T-cell (primary cell): ENCODE measurements at regions of chr6 and their contacts with region 1.

Region 1: DNA sequence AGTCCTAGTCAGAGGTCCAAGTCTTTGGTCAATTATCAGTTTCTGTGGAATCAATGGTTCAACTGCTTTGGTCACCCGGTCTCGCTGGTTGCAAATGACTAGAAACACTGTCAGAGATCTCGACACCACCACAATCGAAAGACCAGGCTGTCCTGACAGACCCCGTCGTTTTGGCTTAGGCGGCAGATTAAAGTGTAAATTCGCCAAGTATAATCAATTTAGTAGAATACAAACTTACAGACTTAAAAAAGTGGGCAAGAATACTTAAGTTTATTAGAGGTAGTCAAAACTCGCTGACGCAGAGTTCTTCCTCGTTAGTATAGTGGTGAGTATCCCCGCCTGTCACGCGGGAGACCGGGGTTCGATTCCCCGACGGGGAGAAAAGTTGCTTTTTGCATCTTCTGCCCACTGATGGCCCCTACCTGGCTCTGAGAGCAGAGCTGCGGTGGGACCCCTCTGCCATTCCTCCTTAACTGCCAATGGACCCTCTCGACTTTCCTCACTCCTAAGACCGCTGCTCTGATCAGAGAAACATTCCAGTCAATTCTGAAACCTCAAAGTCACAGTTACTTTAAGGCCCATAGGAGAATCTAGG is 30.6 kb upstream of the ZNF184 start:
- DNase-seq: peak; percentile 55 to 86 (median 74)
- ATAC-seq: peak; percentile 58 to 66 (median 65)
- H3K4me3 ChIP-seq: peak overlapping the region; percentile 62 to 84
- H3K4me3 Mint-ChIP-seq: peak overlapping the region; percentile 79 to 86 (median 83)
- H3K27ac ChIP-seq: peak overlapping the region; percentile 64
- H3K27ac Mint-ChIP-seq: peak overlapping the region; percentile 80 to 81
- H3K4me1 ChIP-seq: peaks cover 10 to 15% of the 10 kb centered on the region in 2 experiments
- H3K4me1 Mint-ChIP-seq: peaks cover 37 to 42% (median 39%) of the 10 kb centered on the region in 3 donors
- H3K27me3 ChIP-seq: peaks cover 7 to 8% of the 10 kb centered on the region in 2 experiments
- H3K27me3 Mint-ChIP-seq: peaks cover 0 to 10% of the 10 kb centered on the region in 2 donors

Region 2: DNA sequence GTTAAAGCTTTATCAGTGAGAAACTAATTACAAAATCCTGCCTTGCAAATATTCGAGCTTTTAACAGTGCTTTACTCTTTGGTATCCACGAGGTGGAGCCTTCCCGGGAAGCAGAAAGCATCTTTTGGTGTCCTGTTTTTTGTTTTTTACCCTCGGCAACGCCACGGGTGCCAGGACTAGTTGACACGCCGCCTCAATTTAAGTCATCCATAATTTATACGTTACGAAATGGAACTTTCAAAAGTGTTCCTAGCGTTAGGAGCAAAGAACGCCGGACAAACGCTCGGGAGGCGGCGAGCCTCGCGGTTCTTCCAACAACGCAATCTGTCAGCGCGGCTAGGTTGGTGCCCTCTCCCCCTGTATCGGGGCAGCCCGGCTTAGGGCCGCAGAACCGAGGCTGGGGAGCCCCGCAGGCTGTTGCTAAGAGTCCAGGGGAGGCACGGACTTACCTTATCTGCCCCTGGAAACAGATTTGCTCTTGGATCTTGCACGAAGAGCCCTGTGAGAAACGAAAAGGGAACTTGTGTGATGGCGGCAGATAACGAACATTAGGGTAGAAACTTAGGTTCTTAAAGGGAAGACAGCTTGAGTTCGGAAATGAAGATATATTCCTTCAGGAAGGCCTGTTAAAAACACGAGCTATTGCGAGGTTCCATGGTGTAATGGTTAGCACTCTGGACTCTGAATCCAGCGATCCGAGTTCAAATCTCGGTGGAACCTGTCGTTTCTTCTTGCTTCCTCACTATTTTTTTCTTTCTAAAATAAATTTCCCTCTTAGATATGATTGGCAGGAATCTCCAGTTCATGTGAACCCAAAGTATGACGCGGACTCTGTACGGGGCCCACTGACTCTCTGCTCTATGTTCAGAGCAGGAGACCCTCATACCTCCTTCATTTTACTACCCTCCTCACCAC is 15.6 kb after region 1 on chr6:
- CTCF ChIA-PET with region 1: interaction called, 3 to 22 read pairs
- POLR2A ChIA-PET with region 1: no interaction called
- DNase-seq: peak; percentile 37 to 84 (median 53)
- ATAC-seq: peak; percentile 67 to 80 (median 76)
- H3K4me3 ChIP-seq: peak overlapping the region; percentile 92 to 98
- H3K4me3 Mint-ChIP-seq: peak overlapping the region; percentile 86 to 99 (median 90)
- H3K27ac ChIP-seq: peak overlapping the region; percentile 78
- H3K27ac Mint-ChIP-seq: peak overlapping the region; percentile 60 to 71
- H3K4me1 ChIP-seq: peaks cover 6 to 15% of the 10 kb centered on the region in 2 experiments
- H3K4me1 Mint-ChIP-seq: peaks cover 16 to 27% (median 20%) of the 10 kb centered on the region in 3 donors
- H3K27me3 ChIP-seq: peaks cover 3 to 17% of the 10 kb centered on the region in 2 experiments
- H3K27me3 Mint-ChIP-seq: peaks cover 9 to 24% of the 10 kb centered on the region in 2 donors

Region 3: GRCh38 chr6:28399350-28400121 is 896.0 kb after region 1 on chr6 and contains the start of gene ZSCAN12:
- CTCF ChIA-PET with region 1: no interaction called
- POLR2A ChIA-PET with region 1: no interaction called
- DNase-seq: peak; percentile 70 to 88 (median 81)
- ATAC-seq: peak; percentile 92 to 96 (median 96)
- H3K4me3 ChIP-seq: peak within 1 kb of the TSS; percentile 94 to 98
- H3K4me3 Mint-ChIP-seq: peak within 1 kb of the TSS; percentile 90 to 96 (median 93)
- H3K27ac ChIP-seq: peak within 1 kb of the TSS; percentile 71
- H3K27ac Mint-ChIP-seq: peak within 1 kb of the TSS; percentile 78 to 91
- H3K4me1 ChIP-seq: peaks cover 15 to 23% of the 10 kb centered on the region in 2 experiments
- H3K4me1 Mint-ChIP-seq: peaks cover 44 to 48% (median 47%) of the 10 kb centered on the region in 3 donors
- H3K27me3 ChIP-seq: peaks cover 2 to 4% of the 10 kb centered on the region in 2 experiments
- H3K27me3 Mint-ChIP-seq: peaks cover 16 to 17% of the 10 kb centered on the region in 2 donors
- total RNA-seq, gene ZSCAN12: 3.8 to 8.2 (median 6.8) TPM